CD4-positive, alpha-beta T cell (primary cell): ENCODE measurements at regions of chr1 and their contacts with region 1.

Region 1: DNA sequence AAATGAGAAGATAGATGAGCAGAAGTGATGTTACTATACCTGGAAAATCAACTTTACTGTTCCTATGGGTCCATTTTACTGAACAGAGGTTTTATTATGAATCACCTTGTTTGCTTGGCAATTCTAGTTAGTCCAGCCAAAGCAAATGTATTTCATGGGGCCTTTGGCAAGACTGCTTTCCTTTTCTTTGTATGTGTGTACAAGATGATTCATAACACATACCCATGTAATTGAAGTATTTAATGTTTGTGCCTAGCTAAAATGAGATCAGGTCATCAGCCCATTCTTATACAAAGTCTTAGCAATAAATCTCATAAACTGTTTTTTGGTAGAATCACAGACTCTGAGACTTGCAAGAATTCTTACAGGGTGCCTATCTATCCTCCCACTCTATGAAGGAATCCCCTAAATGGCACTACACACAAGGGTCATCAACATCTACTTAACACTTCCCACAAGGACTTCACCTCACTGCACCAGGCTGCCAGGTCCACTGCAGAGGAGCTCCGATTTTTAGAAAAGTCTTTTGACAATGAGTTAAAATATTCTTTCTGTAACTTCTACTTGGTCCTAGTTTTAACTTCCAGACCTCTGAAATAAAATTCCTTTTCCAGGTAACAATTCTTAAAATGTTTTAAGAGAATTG is 58.5 kb downstream of the LPAR3 start:
- DNase-seq: no peak
- ATAC-seq: no peak
- H3K4me3 ChIP-seq: no peak overlapping the region
- H3K4me3 Mint-ChIP-seq: no peak overlapping the region
- H3K27ac ChIP-seq: no peak overlapping the region
- H3K27ac Mint-ChIP-seq: no peak overlapping the region
- H3K4me1 ChIP-seq: no peaks in the 10 kb centered on the region
- H3K4me1 Mint-ChIP-seq: no peaks in the 10 kb centered on the region
- H3K27me3 ChIP-seq: no peaks in the 10 kb centered on the region
- H3K27me3 Mint-ChIP-seq: no peaks in the 10 kb centered on the region
- CTCF ChIP-seq: no peak

Region 2: GRCh38 chr1:83318366-83318765 is 1516.2 kb before region 1 on chr1:
- CTCF ChIA-PET with region 1: no interaction called
- POLR2A ChIA-PET with region 1: no interaction called
- intact Hi-C with region 1: no loop called
- DNase-seq: no peak
- ATAC-seq: no peak
- H3K4me3 ChIP-seq: no peak overlapping the region
- H3K4me3 Mint-ChIP-seq: no peak overlapping the region
- H3K27ac ChIP-seq: no peak overlapping the region
- H3K27ac Mint-ChIP-seq: no peak overlapping the region
- H3K4me1 ChIP-seq: no peaks in the 10 kb centered on the region
- H3K4me1 Mint-ChIP-seq: no peaks in the 10 kb centered on the region
- H3K27me3 ChIP-seq: no peaks in the 10 kb centered on the region
- H3K27me3 Mint-ChIP-seq: no peaks in the 10 kb centered on the region
- CTCF ChIP-seq: no peak

Region 3: GRCh38 chr1:84859866-84860265 is 25.3 kb after region 1 on chr1:
- CTCF ChIA-PET with region 1: no interaction called
- POLR2A ChIA-PET with region 1: no interaction called
- intact Hi-C with region 1: loop called in 1 of 2 experiments (anchors 1 kb)
- DNase-seq: no peak
- ATAC-seq: no peak
- H3K4me3 ChIP-seq: no peak overlapping the region
- H3K4me3 Mint-ChIP-seq: no peak overlapping the region
- H3K27ac ChIP-seq: no peak overlapping the region
- H3K27ac Mint-ChIP-seq: no peak overlapping the region
- H3K4me1 ChIP-seq: peaks cover 36% of the 10 kb centered on the region
- H3K4me1 Mint-ChIP-seq: peaks cover 68% of the 10 kb centered on the region
- H3K27me3 ChIP-seq: no peaks in the 10 kb centered on the region
- H3K27me3 Mint-ChIP-seq: no peaks in the 10 kb centered on the region
- CTCF ChIP-seq: no peak

Region 4: DNA sequence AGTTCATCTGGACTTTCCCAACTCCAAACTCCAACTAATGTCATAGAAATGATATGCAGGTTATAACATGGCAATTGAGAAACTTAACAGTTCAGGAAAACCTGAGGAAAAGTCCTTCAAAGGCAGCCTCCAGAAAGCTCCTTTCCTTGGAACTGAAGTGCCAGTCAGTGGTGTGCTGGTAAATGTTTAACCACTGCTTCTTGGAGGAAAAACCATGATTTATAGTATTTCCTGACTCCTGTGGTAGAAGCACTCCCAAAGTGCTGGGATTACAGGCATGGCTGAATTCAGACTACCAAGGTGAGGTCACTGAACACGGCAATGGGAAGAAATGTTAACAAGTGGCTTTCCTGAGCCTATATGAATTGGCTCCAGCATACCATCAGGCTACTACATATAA is 900.4 kb after region 1 on chr1:
- CTCF ChIA-PET with region 1: no interaction called
- POLR2A ChIA-PET with region 1: no interaction called
- intact Hi-C with region 1: no loop called
- DNase-seq: no peak
- ATAC-seq: no peak
- H3K4me3 ChIP-seq: no peak overlapping the region
- H3K4me3 Mint-ChIP-seq: no peak overlapping the region
- H3K27ac ChIP-seq: no peak overlapping the region
- H3K27ac Mint-ChIP-seq: no peak overlapping the region
- H3K4me1 ChIP-seq: no peaks in the 10 kb centered on the region
- H3K4me1 Mint-ChIP-seq: no peaks in the 10 kb centered on the region
- H3K27me3 ChIP-seq: no peaks in the 10 kb centered on the region
- H3K27me3 Mint-ChIP-seq: peaks cover 8% of the 10 kb centered on the region
- CTCF ChIP-seq: no peak